Activated CD4-positive, alpha-beta T cell treated with anti-CD3 and anti-CD28 coated beads for 36 hours (primary cell): ENCODE measurements at regions of chr4 and their contacts with region 1.

Region 1: DNA sequence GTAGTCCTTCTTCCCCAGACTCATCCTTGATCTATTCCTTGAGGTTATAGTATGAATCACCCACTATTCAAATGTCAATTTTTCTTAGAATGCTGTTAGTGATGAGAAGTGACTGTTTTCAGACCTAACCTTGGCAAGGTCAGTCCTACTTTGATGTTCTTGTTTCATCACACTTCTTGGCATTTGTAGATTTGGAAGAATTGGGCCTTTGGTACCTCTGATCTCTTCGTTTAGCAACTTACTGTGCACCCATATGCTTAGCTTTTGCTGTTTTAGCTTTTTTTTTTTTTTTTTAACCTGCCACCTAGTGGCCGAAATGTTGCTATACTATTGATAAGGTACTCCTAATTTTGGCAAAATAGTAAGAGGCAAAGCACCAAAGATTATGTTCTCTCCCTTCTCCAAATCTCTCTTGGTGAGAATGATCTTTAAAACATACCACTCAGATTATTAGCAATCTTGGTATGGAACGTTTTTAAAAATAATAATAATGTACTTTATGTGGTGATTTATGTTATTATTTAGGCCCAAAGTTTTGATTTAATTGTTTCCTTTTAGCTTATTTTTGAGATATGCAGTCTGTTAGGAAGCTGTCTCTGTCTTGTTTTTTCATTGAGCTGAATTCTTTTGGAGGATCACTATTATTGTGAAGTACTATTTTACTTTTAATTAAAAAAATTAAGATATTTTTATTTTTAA is 16.6 kb downstream of the DCK start:
- DNase-seq: no peak
- ATAC-seq: peak; percentile 27
- H3K4me3 Mint-ChIP-seq: peak overlapping the region; percentile 21
- H3K27ac Mint-ChIP-seq: peak overlapping the region; percentile 61
- H3K4me1 Mint-ChIP-seq: peaks cover 44% of the 10 kb centered on the region
- H3K27me3 Mint-ChIP-seq: no peaks in the 10 kb centered on the region

Region 2: GRCh38 chr4:70651864-70652506 is 358.1 kb before region 1 on chr4:
- CTCF ChIA-PET with region 1: interaction called, 6 read pairs
- POLR2A ChIA-PET with region 1: no interaction called
- intact Hi-C with region 1: loop called in 1 of 2 experiments (anchors 1 kb)
- DNase-seq: no peak
- ATAC-seq: peak; percentile 39
- H3K4me3 Mint-ChIP-seq: no peak overlapping the region
- H3K27ac Mint-ChIP-seq: no peak overlapping the region
- H3K4me1 Mint-ChIP-seq: no peaks in the 10 kb centered on the region
- H3K27me3 Mint-ChIP-seq: peaks cover 3% of the 10 kb centered on the region

Region 3: GRCh38 chr4:70901984-70902576 is 108.0 kb before region 1 on chr4 and contains the start of gene MOB1B:
- CTCF ChIA-PET with region 1: interaction called, 5 read pairs
- POLR2A ChIA-PET with region 1: no interaction called
- intact Hi-C with region 1: loop called in 1 of 2 experiments (anchors 1 kb)
- DNase-seq: peak; percentile 94
- ATAC-seq: peak; percentile 96
- H3K4me3 Mint-ChIP-seq: peak within 1 kb of the TSS; percentile 96
- H3K27ac Mint-ChIP-seq: peak within 1 kb of the TSS; percentile 89
- H3K4me1 Mint-ChIP-seq: peaks cover 27% of the 10 kb centered on the region
- H3K27me3 Mint-ChIP-seq: no peaks in the 10 kb centered on the region
- total RNA-seq, gene MOB1B: 18.5 to 21.9 TPM

Region 4: GRCh38 chr4:71020611-71021010 is 10.6 kb after region 1 on chr4:
- CTCF ChIA-PET with region 1: interaction called, 17 read pairs
- POLR2A ChIA-PET with region 1: no interaction called
- intact Hi-C with region 1: no loop called
- DNase-seq: no peak
- ATAC-seq: no peak
- H3K4me3 Mint-ChIP-seq: no peak overlapping the region
- H3K27ac Mint-ChIP-seq: no peak overlapping the region
- H3K4me1 Mint-ChIP-seq: peaks cover 4% of the 10 kb centered on the region
- H3K27me3 Mint-ChIP-seq: no peaks in the 10 kb centered on the region